ENCODE measurements at regions of chr11 and their contacts with region 1.

Region 1: GRCh38 chr11:22787551-22788162 is 41.9 kb downstream of the SVIP start:
- DNase-seq: peak in 1 of 3 donors; percentile 23
- ATAC-seq: peak; percentile 68
- H3K4me3 ChIP-seq: no peak overlapping the region
- H3K4me1 ChIP-seq: no peaks in the 10 kb centered on the region
- CTCF ChIP-seq: no peak

Region 2: GRCh38 chr11:22337596-22338485 is 449.8 kb before region 1 on chr11 and contains the start of gene SLC17A6:
- intact Hi-C with region 1: loop called (anchors 10 kb)
- DNase-seq: peak in 1 of 3 donors; percentile 8
- ATAC-seq: no peak
- H3K4me3 ChIP-seq: no peak within 1 kb of the TSS
- H3K4me1 ChIP-seq: no peaks in the 10 kb centered on the region
- CTCF ChIP-seq: no peak
- total RNA-seq, gene SLC17A6: not detected

Region 3: GRCh38 chr11:22670830-22671229 is 116.8 kb before region 1 on chr11:
- intact Hi-C with region 1: loop called in 1 of 2 experiments (anchors 2 kb)
- DNase-seq: no peak
- ATAC-seq: peak; percentile 54
- H3K4me3 ChIP-seq: no peak overlapping the region
- H3K4me1 ChIP-seq: no peaks in the 10 kb centered on the region
- CTCF ChIP-seq: no peak

Region 4: DNA sequence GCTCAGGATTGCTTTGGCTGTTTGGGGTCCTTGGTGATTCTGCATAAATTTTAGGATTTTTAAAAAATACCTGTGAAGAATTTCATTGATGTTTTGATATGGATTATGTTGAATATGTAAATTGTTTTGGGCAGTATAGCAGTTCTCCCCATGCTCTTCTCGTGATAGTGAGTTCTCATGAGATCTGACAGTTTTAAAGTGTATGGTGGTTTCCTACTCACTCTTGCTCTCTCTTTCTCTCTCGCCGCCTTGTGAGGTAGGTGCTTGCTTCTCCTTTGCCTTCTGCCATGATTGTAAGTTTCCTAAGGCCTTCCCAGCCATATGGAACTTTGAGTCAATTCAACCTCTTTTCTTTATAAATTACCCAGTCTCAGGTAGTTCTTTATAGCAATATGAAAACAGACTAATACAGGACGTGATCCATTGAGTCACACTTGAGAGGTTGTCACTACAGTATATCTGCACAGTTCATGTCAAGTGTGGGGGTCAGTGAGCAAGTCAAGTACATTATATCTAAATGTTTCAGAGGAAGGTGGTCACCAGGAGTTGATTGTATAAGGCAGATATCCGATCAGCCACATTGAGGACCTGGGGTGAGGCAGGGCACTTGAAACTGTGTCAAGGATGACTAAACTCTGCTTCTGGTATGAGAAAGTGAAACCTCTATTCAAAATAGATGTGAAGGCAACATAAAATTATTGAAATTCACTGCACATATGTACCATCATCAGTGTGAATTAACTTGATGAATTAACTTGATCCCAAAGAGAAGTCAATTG is 143.3 kb after region 1 on chr11:
- intact Hi-C with region 1: no loop called
- DNase-seq: no peak
- ATAC-seq: no peak
- H3K4me3 ChIP-seq: no peak overlapping the region
- H3K4me1 ChIP-seq: no peaks in the 10 kb centered on the region
- CTCF ChIP-seq: no peak

Measured in mucosa of descending colon (tissue), 3 donors.